ENCODE measurements at regions of chr4 and their contacts with region 1.

Region 1: DNA sequence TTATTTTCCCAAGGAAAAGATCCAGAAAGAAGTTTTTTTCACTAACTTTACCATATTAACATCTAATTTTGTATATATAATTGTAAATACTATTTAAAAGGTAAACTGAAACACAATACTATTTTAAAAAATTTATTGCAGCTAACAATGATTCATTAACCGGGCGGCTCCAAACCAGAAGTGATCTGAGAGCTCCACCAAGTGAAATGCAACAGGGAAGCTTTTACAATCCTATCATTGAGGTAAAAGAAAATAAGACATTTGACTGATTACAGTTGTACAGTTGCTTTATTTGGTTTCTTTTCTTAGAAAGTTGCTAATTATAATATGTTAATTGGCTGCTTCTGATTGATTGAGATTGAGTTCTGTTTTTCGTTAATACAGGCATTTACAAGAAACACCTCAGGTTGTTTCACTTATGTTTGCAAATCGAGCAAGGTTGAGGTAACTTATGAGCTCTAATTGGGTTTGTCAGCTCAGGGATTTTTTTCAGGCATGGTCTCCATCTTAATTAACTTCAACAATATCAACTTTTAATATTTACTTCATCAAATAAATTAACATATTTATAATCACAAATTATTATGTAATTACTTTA is 220.2 kb upstream of the UGT8 start:
- DNase-seq: no peak
- H3K4me3 ChIP-seq: no peak overlapping the region
- H3K27ac ChIP-seq: no peak overlapping the region
- H3K4me1 ChIP-seq: no peaks in the 10 kb centered on the region
- H3K27me3 ChIP-seq: no peaks in the 10 kb centered on the region
- CTCF ChIP-seq: no peak
- EP300 ChIP-seq: no peak
- POLR2A ChIP-seq: no peak

Region 2: DNA sequence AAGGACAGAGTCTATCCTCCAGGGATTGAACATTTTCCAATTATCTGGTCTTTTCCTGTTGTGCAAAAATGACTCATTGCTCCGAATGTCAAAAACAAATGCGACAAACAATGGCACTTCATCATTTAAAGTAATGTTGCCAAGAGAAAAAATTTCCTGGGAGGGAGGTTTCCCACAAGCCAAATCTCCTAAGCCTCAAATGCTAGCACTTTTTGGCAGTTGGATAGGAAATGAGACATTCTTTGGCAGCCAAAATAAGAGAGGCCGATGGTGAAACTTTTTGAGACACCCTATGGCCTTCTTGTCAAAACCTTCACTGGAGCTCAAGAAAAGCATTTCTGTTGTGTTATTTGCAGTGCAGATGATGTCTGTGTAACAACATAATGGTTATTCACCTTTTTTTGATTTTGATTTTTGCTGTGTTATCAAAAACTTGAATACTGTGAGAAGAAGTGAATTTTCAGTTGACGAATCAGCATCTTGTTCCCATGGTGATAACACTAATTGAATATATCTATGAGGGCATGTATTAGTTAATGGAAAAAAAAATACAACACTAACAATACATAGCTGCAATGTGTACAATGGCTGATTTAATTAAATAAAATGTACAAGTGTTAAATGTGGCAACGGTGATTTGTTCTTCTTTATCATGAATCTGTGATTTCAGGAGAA is 995.2 kb before region 1 on chr4:
- intact Hi-C with region 1: loop called in 1 of 4 experiments (anchors 10 kb)
- DNase-seq: no peak
- H3K4me3 ChIP-seq: no peak overlapping the region
- H3K27ac ChIP-seq: no peak overlapping the region
- H3K4me1 ChIP-seq: no peaks in the 10 kb centered on the region
- H3K27me3 ChIP-seq: no peaks in the 10 kb centered on the region
- CTCF ChIP-seq: no peak
- EP300 ChIP-seq: no peak
- POLR2A ChIP-seq: no peak

Measured in ovary (tissue), 10 donors.